Heart right ventricle (tissue), 16 donors: ENCODE measurements at regions of chr12 and their contacts with region 1.

Region 1: DNA sequence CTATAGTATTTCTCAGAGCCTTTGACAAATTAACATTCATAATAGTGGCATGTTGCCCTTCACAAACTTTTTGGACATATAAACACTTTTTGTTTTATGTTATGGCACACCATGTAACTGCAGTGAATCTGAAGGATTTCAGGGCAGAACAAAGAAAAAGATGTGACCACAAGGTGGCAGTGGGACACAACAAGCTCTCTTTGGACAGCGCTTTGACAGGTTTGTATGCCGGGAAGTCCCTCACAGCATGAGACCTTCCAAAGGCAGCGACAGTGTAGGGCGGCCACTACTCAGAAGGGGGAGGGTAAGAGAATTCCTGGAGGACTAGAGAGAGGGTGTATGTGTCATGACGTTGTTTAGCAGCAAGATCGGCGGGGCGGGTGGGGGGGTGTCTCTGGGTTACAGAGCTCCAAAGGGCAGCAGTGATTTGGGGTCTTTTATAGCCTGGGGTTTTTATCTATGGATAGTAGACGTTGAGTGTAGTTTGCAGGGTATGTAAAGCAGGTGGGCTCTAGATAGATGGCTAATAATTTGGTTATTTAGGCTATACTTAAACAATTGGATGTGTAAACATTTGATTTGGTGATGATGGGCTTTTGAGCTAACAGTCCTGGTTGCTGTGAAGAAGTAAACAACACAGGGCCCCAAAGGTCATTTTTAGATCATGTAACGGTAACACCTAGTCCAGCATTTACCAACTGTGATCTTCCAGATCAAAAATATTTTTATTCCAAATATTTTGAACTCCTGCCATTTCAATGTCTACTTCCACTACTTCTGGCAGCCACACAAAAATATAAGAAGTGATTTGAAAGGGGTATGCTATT is 22.9 kb downstream of the ETFBKMT start:
- DNase-seq: peak; percentile 17 to 50
- ATAC-seq: peak; percentile 64 to 89 (median 78)
- H3K4me3 ChIP-seq: no peak overlapping the region
- H3K27ac ChIP-seq: peak overlapping the region in 1 of 10 donors; percentile 16
- H3K4me1 ChIP-seq: peaks cover 0 to 10% (median 0%) of the 10 kb centered on the region in 9 donors
- H3K27me3 ChIP-seq: no peaks in the 10 kb centered on the region
- CTCF ChIP-seq: peak; percentile 22 to 82 (median 65)

Region 2: DNA sequence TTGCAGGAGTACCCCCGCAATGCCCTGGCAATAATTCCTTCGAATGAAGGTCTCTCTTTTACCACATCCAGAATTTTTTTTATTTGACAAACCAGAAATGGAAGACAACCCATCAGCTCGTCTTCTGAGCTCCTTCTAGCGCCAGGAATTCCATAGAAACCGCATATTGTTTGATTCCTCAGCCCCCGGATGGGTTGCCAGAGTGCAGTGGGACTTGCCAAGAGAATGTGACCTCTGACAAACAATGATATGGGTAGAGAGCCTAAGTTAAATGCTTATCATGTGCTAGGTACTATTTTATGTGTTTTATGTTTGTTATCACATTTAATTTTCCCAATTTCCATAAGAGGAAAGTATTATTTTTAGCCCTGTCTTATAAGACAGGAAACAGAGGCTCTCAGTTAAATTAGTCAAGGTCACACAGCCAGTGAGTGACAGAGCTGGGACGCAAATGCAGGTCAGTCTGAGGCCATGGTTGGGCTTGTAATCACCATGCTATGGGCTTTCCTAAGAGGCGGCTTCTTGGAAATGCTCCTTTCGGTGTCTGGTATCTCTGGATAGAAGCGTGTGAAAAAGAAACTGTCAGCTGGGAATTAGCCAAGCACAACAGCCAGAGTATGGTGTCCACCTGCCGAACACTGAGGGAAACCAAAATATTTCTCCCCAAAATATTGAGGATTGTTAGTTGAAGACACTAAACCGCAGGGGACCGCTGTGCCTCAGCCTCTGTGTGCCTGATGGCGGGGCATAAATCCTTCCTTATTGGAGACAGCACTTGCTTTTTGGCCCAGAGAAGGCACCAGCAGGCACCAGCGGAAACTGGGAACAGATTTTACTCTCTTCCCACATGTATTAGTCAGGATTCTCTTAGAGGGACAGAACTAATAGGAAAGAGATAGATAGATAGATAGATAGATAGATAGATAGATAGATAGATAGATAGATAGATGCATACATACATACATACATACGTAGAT is 52.3 kb before region 1 on chr12:
- intact Hi-C with region 1: no loop called
- DNase-seq: peak; percentile 23 to 72
- ATAC-seq: peak; percentile 88 to 97 (median 94)
- H3K4me3 ChIP-seq: peak overlapping the region in 1 of 10 donors; percentile 3
- H3K27ac ChIP-seq: peak overlapping the region in 9 of 10 donors; percentile 38 to 68 (median 57)
- H3K4me1 ChIP-seq: peaks cover 6 to 24% (median 17%) of the 10 kb centered on the region in 9 donors
- H3K27me3 ChIP-seq: no peaks in the 10 kb centered on the region
- CTCF ChIP-seq: no peak

Region 3: DNA sequence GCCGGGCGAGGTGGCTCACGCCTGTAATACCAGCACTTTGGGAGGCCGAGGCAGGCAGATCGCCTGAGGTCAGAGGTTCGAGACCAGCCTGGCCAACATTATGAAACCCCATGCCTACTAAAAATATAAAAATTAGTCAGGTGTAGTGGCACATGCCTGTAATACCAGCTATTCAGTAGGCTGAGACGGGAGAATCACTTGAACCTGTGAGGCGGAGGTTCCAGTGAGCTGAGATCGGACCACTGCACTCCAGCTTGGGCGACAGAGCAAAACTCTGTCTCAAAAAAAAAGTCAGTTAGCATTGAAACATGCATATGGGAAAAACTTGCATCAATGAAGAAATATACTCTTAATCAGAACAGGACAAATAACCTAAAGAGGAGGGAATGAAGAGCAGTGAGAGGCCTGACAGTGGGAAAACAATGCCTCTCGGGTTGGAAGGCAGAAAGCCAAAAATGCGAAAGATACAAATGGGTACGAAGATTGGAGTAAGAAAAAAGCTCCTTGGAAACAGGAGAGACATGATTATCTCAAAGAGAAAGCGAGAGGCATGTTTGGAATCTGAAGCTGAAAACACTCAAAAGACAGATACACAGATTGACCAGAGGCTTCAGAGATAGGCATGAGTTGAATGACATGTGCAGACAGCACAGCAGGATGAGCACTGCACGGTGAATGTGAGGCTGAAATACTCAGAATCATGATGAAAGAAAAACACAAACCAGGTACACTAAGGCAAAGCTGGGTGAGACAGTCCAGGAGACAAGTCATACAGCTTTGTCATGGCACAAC is 307.4 kb after region 1 on chr12:
- intact Hi-C with region 1: loop called in 1 of 10 experiments (anchors 10 kb)
- DNase-seq: no peak
- ATAC-seq: peak in 1 of 8 donors; percentile 11
- H3K4me3 ChIP-seq: no peak overlapping the region
- H3K27ac ChIP-seq: no peak overlapping the region
- H3K4me1 ChIP-seq: peaks cover 0 to 16% (median 0%) of the 10 kb centered on the region in 9 donors
- H3K27me3 ChIP-seq: no peaks in the 10 kb centered on the region
- CTCF ChIP-seq: no peak

Region 4: GRCh38 chr12:32051559-32052414 is 369.4 kb after region 1 on chr12:
- intact Hi-C with region 1: loop called in 2 of 10 experiments (anchors 10 kb)
- DNase-seq: no peak
- ATAC-seq: peak in 7 of 8 donors; percentile 16 to 94 (median 84)
- H3K4me3 ChIP-seq: no peak overlapping the region
- H3K27ac ChIP-seq: peak overlapping the region in 1 of 10 donors; percentile 18
- H3K4me1 ChIP-seq: peaks cover 0 to 14% (median 4%) of the 10 kb centered on the region in 9 donors
- H3K27me3 ChIP-seq: no peaks in the 10 kb centered on the region
- CTCF ChIP-seq: no peak

Region 5: GRCh38 chr12:32062881-32063280 is 380.5 kb after region 1 on chr12:
- intact Hi-C with region 1: loop called in 4 of 10 experiments (anchors 2 to 10 kb)
- DNase-seq: no peak
- ATAC-seq: no peak
- H3K4me3 ChIP-seq: no peak overlapping the region
- H3K27ac ChIP-seq: no peak overlapping the region
- H3K4me1 ChIP-seq: peaks cover 0 to 3% (median 0%) of the 10 kb centered on the region in 9 donors
- H3K27me3 ChIP-seq: no peaks in the 10 kb centered on the region
- CTCF ChIP-seq: no peak